Dorsolateral prefrontal cortex (tissue), 120 donors: ENCODE measurements at regions of chr17 and their contacts with region 1.

Region 1: DNA sequence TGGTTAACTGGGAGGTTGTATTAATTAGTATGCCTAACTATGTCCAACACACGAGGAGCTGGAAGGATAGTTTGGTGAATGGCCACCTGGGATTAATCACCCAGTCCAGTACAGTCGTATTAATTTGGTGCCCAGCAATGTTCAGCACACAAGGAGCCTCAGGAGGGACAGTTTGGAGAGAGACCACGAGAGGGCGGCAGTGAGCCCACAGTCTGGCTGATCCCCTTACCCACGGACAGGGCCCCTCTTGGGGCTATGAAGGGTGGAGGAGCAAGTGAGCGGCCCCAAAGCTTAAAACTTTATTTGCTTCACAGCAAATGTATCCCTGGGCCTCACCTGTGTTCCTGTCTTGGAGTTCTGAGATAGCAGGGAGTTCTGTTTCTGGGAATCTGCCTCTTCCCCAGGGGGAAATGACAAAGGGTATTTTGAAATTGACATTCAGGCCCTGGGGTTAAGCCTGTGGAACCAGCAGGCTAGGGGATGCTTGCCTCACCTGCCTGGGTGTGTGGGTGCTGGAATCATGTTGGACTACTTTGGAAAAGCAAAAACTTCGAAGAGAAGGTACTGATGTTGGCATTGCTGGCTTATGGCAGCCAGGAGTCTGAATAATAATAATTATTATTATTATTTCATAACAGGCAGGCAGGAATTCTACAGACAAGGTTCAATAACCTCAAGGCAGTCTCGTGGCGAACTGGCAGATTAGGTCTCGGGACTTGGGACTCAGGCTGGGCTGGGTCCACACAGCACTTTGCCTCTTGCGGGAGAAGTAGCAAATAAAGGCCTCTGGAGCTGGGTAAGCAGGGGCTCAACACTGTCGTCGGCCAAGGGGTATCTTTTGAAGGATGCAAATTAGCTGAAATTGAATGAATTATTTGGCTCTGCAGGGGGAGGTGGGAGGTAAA is 227.6 kb upstream of the ASIC2 start:
- DNase-seq: peak in 8 of 10 donors; percentile 21 to 65 (median 52)
- H3K4me3 ChIP-seq: no peak overlapping the region
- H3K27ac ChIP-seq: no peak overlapping the region
- H3K27me3 ChIP-seq: no peaks in the 10 kb centered on the region
- CTCF ChIP-seq: peak; percentile 31 to 85 (median 73)

Region 2: DNA sequence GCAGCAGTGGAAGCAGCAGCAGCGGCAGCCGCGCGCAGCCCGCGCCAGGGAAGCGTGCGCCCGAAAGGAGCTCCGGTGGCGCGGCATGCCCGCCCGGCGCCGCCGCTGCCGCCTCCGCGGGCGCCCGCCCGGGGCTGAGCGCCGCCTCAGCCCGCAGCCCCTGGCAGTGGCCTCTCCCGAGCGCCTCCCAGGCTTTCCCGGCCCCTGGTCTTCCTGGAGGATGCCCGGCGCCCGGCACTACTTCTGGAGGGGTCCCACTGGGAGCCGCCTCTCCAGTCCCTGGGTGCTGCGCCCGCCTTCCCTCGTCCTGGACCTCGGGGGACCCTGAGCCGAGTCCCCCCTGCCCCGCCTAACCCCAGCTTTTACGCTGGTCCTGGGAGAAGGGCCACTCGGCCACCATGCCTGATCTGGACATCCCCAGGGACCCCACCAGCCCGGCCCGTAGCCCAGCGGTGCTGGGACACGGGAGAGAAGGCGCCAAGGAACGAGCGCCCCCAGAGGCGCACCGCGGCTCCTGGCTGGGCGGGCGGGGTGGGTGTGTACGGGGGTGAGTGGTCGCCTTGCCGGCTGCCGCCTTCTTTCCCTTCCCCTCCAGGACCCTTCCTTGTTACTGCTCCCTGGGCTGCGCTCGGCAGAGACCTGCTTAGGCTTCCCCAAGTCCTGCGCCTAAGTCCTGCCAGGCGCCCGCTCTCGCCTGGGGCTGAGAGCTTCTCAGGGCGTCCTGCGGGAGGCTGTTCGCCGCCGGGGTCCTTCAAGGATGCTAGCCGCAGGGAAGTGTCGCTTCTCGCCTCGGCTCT is 228.3 kb before region 1 on chr17:
- intact Hi-C with region 1: loop called in 1 of 2 experiments (anchors 2 kb)
- DNase-seq: peak in 4 of 10 donors; percentile 14 to 46 (median 38)
- H3K4me3 ChIP-seq: peak overlapping the region in 58 of 59 donors; percentile 28 to 69 (median 55)
- H3K27ac ChIP-seq: peak overlapping the region in 24 of 59 donors; percentile 21 to 82 (median 52)
- H3K27me3 ChIP-seq: peaks cover 0 to 63% (median 26%) of the 10 kb centered on the region in 45 donors
- CTCF ChIP-seq: peak in 46 of 56 donors; percentile 9 to 57 (median 32)

Region 3: DNA sequence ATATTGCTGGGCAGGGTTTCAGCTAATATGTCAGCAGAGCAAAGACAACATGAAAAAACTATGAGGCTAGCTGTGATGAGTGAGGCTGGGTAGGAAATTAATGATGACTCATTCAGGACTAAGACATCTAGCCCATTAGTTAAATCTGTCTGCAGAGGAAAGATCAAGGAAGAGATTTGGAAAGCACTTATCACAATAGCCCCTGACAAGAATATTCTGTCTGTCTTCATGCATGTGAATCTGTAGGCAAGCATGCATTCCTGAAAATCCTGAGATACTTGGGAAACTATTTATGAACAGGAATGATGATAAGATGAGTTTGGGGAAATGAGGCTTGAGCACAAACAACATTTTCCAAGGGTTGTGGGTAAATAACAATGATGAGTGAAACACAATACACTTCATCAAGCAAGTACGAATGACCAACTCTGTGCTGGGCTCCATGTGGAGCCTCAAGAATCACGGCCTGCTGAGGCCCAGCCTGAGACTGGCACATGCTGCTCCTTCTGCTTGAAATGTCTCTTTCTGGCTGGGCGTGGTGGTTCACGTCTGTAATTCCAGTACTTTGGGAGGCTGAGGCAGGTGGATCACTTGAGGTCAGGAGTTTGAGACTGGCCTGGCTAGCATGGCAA is 131.1 kb before region 1 on chr17:
- intact Hi-C with region 1: no loop called
- DNase-seq: no peak
- H3K4me3 ChIP-seq: no peak overlapping the region
- H3K27ac ChIP-seq: no peak overlapping the region
- H3K27me3 ChIP-seq: peaks cover 0 to 5% (median 0%) of the 10 kb centered on the region in 45 donors
- CTCF ChIP-seq: no peak

Region 4: DNA sequence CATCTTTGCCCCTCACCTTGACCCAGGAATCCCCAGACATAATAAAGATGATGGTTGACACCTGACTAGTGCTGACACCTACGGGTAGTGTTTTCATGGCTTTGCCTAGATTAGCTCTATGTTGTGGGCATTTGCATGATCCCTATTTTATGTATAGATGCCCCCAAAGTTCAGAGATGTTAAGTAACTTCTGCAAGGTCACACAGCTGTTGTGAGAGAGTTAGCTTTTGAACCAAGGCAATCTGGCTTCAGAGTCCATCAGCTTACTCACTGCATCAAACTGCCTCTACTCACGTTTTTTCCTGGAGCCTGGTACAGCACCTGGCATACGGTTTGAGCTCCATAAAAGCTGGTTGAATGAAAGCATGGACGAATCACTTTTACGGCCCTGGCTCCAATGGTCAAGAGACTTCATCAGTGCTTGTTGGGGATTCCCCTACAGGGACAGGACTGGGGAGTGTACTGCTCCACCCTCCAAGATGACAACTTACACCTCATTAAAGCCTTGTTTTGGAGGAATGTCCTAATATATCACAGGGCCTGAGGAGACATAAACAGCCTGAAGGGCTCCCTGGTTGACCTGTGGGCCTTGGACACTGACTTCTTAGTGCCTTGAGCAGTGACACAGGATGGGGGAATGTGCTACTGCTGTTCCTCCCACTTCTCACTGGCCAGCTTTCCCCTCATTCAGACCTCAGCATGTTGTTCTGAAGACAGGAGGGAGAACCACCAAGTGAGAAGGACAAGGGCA is 34.4 kb before region 1 on chr17:
- intact Hi-C with region 1: no loop called
- DNase-seq: no peak
- H3K4me3 ChIP-seq: no peak overlapping the region
- H3K27ac ChIP-seq: no peak overlapping the region
- H3K27me3 ChIP-seq: peaks cover 0 to 4% (median 0%) of the 10 kb centered on the region in 45 donors
- CTCF ChIP-seq: no peak

Region 5: DNA sequence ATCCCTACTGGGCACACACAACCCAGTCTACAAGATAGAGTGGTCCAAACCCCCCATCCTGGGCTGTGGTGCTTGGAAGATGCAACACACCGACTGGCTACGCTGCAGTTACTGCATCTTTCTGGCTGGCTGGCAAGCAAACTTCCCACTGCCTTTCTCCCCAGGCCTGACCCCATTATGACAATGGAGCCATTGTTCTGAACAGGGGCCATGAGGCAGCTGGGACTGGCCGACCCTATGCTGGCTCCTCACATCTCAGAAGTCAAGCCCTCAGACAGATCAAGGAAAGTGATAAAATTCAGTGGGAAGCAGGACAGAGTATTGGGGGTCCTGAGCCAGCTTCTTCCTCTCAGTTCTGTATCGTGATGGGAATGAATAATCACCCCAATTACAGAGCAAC is 136.5 kb after region 1 on chr17:
- intact Hi-C with region 1: loop called in 1 of 2 experiments (anchors 5 kb)
- DNase-seq: no peak
- H3K4me3 ChIP-seq: no peak overlapping the region
- H3K27ac ChIP-seq: no peak overlapping the region
- H3K27me3 ChIP-seq: peaks cover 0 to 2% (median 0%) of the 10 kb centered on the region in 45 donors
- CTCF ChIP-seq: no peak

Region 6: GRCh38 chr17:33745047-33745760 is 224.5 kb after region 1 on chr17:
- intact Hi-C with region 1: loop called in 1 of 2 experiments (anchors 10 kb)
- DNase-seq: no peak
- H3K4me3 ChIP-seq: no peak overlapping the region
- H3K27ac ChIP-seq: no peak overlapping the region
- H3K27me3 ChIP-seq: no peaks in the 10 kb centered on the region
- CTCF ChIP-seq: no peak